ENCODE measurements at regions of chr1 and their contacts with region 1.

Region 1: GRCh38 chr1:178542560-178543356 is 29.8 kb downstream of the TEX35 start:
- ATAC-seq: peak; percentile 74 to 88 (median 86)
- H3K4me3 ChIP-seq: peak overlapping the region; percentile 44 to 58 (median 47)
- H3K27ac ChIP-seq: peak overlapping the region; percentile 69 to 83
- H3K4me1 ChIP-seq: peaks cover 3 to 13% of the 10 kb centered on the region in 2 donors

Region 2: DNA sequence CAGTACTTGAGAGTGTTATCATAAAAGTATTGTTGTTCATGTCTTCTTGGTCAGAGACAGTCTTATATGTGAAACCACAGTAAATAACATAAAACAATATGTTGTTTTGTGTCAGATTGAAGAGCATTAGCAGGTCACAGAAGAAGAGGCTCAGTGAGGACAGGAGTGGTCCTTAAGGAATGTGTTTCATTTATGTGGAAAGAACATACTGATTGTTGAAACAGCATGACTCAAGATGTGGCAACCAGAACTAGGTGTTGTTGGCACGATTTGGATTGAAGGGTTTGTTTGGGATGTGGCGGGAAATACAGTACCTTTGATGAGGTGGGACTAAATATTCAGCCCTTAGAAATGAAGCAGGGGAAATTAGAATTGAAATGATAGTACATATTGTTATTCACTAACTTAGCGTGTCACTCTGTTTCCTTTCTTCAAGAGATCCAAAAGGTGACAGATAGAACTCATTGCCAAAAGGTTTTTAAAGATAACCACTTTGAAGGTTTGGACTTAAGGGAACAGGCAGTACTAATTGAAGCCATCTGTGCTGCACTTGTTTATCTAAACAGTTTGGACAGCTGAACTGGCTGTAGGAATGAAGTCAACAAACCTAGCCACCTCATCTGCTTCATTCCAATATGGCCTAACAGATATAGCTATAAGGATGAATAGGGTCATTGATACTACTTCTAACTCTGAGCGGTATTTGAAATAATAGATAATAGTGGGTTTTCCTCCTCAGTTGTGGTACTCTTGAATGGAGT is 196.7 kb after region 1 on chr1:
- in situ Hi-C with region 1: loop called in 1 of 9 experiments (anchors 10 kb)
- ATAC-seq: no peak
- H3K4me3 ChIP-seq: no peak overlapping the region
- H3K27ac ChIP-seq: no peak overlapping the region
- H3K4me1 ChIP-seq: no peaks in the 10 kb centered on the region

Region 3: DNA sequence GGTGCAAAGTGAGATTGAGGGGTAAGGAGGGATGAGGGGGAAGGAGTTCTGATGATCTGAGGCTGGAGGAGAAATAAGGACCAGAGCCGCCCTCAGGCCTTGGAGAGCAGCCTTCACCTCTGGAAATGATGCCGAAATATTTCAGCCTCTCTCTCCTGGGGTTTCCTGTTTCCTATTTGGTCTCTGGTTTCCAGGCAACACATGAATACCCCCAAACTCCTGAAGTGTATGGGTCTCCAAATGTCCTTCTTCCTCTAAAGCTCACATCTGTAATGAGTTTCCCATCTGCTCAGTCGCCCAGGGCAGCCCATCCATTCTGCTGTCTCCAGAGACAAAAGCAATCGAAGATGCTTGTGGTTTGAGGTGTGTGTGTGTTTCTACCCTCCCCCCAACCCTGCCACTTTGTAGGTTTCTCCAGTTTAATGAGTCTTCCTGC is 430.9 kb after region 1 on chr1:
- in situ Hi-C with region 1: loop called in 1 of 9 experiments (anchors 25 kb)
- ATAC-seq: peak in 5 of 8 experiments; percentile 50 to 79 (median 64)
- H3K4me3 ChIP-seq: no peak overlapping the region
- H3K27ac ChIP-seq: peak overlapping the region in 1 of 2 donors; percentile 68
- H3K4me1 ChIP-seq: peaks cover 17 to 19% of the 10 kb centered on the region in 2 donors

Region 4: DNA sequence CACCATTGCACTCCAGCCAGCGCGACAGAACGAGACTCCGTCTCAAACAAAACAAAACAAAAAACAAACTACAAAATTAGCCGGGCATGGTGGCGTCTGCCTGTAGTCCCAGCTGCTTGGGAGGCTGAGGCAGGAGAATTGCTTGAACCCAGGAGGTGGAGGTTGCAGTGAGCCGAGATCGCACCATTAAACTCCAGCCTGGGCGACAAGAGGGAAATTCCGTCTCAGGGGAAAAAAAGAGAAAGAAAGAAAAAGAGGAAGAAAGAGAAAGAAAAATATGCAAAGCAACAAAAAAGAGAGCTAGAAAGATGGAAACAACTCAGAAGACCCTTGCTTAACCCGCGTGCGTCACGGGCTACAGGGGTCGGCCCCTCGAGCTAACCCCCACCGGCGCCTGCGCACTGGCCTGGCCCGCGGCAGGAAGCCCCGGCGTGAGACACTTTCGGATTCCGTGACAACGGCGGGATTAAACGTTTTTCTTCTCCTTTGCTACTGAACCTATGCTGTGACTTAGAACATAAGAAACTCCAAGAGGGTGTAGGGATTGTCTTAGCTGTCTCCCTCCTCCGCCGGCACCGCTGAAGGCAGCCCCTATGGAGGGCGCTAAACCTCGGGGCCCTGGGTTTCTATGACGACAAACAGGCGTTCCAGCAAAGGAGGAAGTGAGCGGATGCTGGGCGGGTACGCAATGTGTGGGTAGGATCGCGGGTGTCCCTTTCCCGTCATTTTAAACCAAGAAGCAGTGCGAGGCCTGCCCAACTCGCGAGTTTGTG is 822.7 kb after region 1 on chr1 and contains the start of gene AXDND1:
- in situ Hi-C with region 1: loop called in 5 of 9 experiments (anchors 25 kb)
- ATAC-seq: peak; percentile 95 to 98 (median 96)
- H3K4me3 ChIP-seq: peak within 1 kb of the TSS; percentile 47 to 61 (median 51)
- H3K27ac ChIP-seq: peak within 1 kb of the TSS; percentile 93 to 96
- H3K4me1 ChIP-seq: peaks cover 3 to 5% of the 10 kb centered on the region in 2 donors
- total RNA-seq, gene AXDND1: 0.27 to 2.6 (median 1.5) TPM